ENCODE measurements at regions of chr4 and their contacts with region 1.

Region 1: GRCh38 chr4:87388901-87389300 is 2.1 kb downstream of the HSD17B11 start:
- DNase-seq: no peak
- H3K4me3 Mint-ChIP-seq: peak overlapping the region; percentile 77
- H3K27ac Mint-ChIP-seq: peak overlapping the region; percentile 56
- H3K4me1 Mint-ChIP-seq: peaks cover 35% of the 10 kb centered on the region
- H3K27me3 Mint-ChIP-seq: no peaks in the 10 kb centered on the region
- CTCF ChIP-seq: no peak

Region 2: GRCh38 chr4:87375719-87376291 is 13.1 kb before region 1 on chr4:
- CTCF ChIA-PET with region 1: interaction called, 10 read pairs
- intact Hi-C with region 1: no loop called
- DNase-seq: no peak
- H3K4me3 Mint-ChIP-seq: no peak overlapping the region
- H3K27ac Mint-ChIP-seq: no peak overlapping the region
- H3K4me1 Mint-ChIP-seq: no peaks in the 10 kb centered on the region
- H3K27me3 Mint-ChIP-seq: no peaks in the 10 kb centered on the region
- CTCF ChIP-seq: peak; percentile 47

Region 3: GRCh38 chr4:87422104-87423052 is 33.5 kb after region 1 on chr4 and contains the start of gene NUDT9:
- CTCF ChIA-PET with region 1: interaction called, 4 read pairs
- intact Hi-C with region 1: loop called (anchors 5 kb)
- DNase-seq: peak; percentile 83
- H3K4me3 Mint-ChIP-seq: peak within 1 kb of the TSS; percentile 98
- H3K27ac Mint-ChIP-seq: peak within 1 kb of the TSS; percentile 90
- H3K4me1 Mint-ChIP-seq: no peaks in the 10 kb centered on the region
- H3K27me3 Mint-ChIP-seq: no peaks in the 10 kb centered on the region
- CTCF ChIP-seq: no peak
- total RNA-seq, gene NUDT9: 15.7 and 16.8 TPM in 2 replicates

Region 4: DNA sequence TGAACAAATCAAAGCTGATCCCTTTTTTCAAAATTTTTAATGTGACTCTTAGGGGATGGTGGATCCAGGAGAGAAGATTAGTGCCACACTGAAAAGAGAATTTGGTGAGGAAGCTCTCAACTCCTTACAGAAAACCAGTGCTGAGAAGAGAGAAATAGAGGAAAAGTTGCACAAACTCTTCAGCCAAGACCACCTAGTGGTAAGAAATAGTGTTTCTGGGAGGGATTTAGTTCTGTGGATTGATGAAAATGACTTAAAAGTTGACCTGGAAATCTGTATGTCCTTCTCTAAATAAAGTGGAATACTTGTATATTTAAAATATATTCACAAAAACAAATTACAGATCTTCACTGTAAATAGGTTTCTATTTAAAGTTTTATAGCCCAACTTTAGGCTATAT is 62.6 kb after region 1 on chr4:
- CTCF ChIA-PET with region 1: no interaction called
- intact Hi-C with region 1: no loop called
- DNase-seq: no peak
- H3K4me3 Mint-ChIP-seq: no peak overlapping the region
- H3K27ac Mint-ChIP-seq: no peak overlapping the region
- H3K4me1 Mint-ChIP-seq: no peaks in the 10 kb centered on the region
- H3K27me3 Mint-ChIP-seq: no peaks in the 10 kb centered on the region
- CTCF ChIP-seq: no peak